AG04450 (cell line): ENCODE measurements at regions of chr14 and their contacts with region 1.

Region 1: DNA sequence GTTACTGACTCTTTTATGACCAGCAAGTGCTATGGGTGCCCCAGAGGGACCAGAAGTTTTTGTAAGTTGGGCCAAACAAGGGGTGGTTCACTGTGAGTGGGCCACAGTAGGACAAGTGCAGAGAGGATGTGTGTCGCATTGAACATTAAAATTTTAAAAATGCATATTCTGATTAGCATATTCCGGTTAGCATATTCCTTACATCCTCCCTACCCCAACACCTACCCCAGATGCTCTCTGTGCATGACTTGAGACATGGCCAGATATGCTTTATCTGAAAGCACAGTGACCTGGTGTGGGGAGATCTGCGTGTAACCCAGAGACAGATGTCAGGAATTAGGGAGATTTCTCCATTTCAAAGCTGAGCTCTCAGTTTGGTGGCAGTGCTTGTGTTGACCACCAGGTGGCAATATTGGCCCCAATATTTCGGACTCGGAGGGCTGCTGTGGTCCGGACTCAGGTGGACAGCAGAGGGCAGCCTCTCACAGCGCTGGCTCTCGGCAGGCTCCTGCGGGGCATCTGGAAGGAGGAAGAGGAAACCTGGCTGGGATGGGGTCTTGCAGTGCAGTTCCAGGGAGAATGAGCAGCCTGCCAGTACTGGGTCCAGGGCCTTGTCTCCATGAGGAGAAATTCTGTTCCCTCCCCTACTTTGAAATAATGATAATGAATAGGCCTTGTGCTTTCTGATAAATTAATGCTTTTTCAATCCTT is 1.6 kb upstream of the CEBPE start:
- DNase-seq: peak; percentile 65
- H3K4me3 ChIP-seq: no peak overlapping the region
- H3K27ac ChIP-seq: no peak overlapping the region
- H3K27me3 ChIP-seq: peaks cover 3% of the 10 kb centered on the region
- CTCF ChIP-seq: peak; percentile 100

Region 2: DNA sequence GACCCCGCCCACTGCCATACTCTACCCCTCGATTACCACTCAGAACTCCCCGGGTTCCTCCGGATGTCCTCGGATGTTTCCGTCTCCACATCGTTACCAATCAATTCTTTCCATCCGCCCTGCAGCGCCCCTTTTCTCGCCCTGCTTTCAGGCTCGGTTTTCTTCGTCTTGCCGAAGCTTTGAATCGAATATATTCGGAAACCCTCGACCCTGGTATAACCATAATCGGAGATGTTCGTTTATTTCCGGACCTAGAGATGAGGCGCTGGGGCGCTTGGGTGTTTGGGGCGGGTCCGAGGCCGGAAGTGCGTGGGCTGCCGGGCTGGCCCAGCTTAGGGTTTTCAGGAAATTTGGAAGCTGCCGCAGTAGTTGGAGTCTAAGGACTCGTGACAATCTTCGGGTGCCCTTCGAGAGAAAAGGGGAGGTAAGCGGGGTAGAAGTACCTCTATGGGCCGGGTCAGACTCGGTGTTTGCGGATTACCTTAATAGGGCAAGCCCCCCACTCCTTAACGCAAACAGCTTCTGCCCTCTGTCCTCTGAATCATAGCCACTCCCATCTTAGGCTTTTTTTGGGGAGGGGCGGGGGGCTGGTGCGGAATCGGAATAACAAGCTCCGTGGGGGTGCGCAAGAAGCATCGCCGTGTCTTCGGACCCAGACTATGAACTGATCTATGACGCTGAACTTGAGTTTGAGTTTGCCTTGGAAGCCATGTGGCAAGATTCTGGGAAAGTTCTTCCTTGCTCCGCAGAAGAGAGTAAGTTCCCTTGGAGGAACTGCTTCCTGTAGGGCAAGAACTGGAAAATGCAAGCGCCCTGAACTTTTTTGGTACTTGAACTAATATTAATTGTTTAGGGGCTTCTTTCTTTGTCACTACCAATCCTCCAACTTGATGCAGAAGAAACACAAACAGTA is 25.2 kb before region 1 on chr14 and contains the start of gene C14orf119:
- CTCF ChIA-PET with region 1: interaction called, 21 read pairs
- POLR2A ChIA-PET with region 1: interaction called, 6 read pairs
- DNase-seq: peak; percentile 99
- H3K4me3 ChIP-seq: peak within 1 kb of the TSS; percentile 95
- H3K27ac ChIP-seq: peak within 1 kb of the TSS; percentile 99
- H3K27me3 ChIP-seq: no peaks in the 10 kb centered on the region
- CTCF ChIP-seq: no peak
- polyA plus RNA-seq, gene C14orf119: 119 and 128 TPM in 2 replicates

Region 3: GRCh38 chr14:23130871-23131270 is 10.2 kb after region 1 on chr14:
- CTCF ChIA-PET with region 1: interaction called, 35 read pairs
- POLR2A ChIA-PET with region 1: no interaction called
- DNase-seq: no peak
- H3K4me3 ChIP-seq: no peak overlapping the region
- H3K27ac ChIP-seq: no peak overlapping the region
- H3K27me3 ChIP-seq: peaks cover 12% of the 10 kb centered on the region
- CTCF ChIP-seq: no peak

Region 4: GRCh38 chr14:23154964-23155587 is 34.4 kb after region 1 on chr14:
- CTCF ChIA-PET with region 1: interaction called, 46 read pairs
- POLR2A ChIA-PET with region 1: no interaction called
- DNase-seq: peak; percentile 77
- H3K4me3 ChIP-seq: peak overlapping the region; percentile 36
- H3K27ac ChIP-seq: peak overlapping the region; percentile 83
- H3K27me3 ChIP-seq: peaks cover 5% of the 10 kb centered on the region
- CTCF ChIP-seq: no peak

Region 5: DNA sequence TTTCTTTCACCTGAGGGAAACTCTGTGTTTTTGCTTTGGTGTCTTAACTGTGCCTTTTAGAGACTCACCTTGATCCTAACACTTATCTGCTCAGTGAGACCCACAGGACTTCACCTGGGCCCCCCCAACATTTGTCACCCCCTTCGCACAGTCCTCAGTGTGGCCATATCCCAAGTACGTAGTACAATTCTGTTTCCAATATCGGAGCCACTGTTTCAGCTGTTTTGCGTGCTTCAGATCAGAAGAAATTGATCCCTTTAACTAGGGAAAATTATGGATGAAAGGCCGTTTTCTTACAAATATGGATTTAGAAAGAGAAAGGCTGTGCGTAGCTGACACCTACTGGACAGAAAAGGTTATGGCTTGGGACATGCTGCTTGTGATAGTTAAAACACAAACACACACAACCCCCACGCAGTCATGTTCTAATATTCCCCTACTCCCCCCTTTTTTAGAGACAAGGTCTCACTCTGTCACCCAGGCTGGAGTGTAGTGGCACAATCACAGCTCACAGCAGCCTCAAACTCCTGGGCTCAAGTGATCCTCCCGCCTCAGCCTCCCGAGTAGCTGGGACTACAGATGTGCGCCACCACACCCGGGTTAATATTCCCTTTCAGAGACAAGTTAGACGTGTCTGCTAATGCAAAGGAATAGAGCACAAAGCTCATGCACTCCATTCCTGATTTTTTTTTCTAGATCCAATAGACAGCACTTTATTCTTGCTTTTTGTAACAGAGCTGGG is 66.4 kb after region 1 on chr14:
- CTCF ChIA-PET with region 1: interaction called, 818 read pairs
- POLR2A ChIA-PET with region 1: interaction called, 3 read pairs
- DNase-seq: peak; percentile 47
- H3K4me3 ChIP-seq: no peak overlapping the region
- H3K27ac ChIP-seq: no peak overlapping the region
- H3K27me3 ChIP-seq: peaks cover 24% of the 10 kb centered on the region
- CTCF ChIP-seq: peak; percentile 89

Region 6: GRCh38 chr14:23202001-23202400 is 81.3 kb after region 1 on chr14:
- CTCF ChIA-PET with region 1: interaction called, 18 read pairs
- POLR2A ChIA-PET with region 1: no interaction called
- DNase-seq: no peak
- H3K4me3 ChIP-seq: no peak overlapping the region
- H3K27ac ChIP-seq: no peak overlapping the region
- H3K27me3 ChIP-seq: peaks cover 12% of the 10 kb centered on the region
- CTCF ChIP-seq: no peak